Activated B cell treated with CpG ODN at 0.5 μM for 24 hours (primary cell): ENCODE measurements at regions of chr19 and their contacts with region 1.

Region 1: GRCh38 chr19:49210108-49210900 is 52.7 kb downstream of the TRPM4 start:
- DNase-seq: peak; percentile 32
- ATAC-seq: peak; percentile 83
- H3K4me3 Mint-ChIP-seq: peak overlapping the region; percentile 57
- H3K27ac Mint-ChIP-seq: no peak overlapping the region
- H3K4me1 Mint-ChIP-seq: peaks cover 43% of the 10 kb centered on the region
- H3K27me3 Mint-ChIP-seq: no peaks in the 10 kb centered on the region
- CTCF ChIP-seq: no peak

Region 2: DNA sequence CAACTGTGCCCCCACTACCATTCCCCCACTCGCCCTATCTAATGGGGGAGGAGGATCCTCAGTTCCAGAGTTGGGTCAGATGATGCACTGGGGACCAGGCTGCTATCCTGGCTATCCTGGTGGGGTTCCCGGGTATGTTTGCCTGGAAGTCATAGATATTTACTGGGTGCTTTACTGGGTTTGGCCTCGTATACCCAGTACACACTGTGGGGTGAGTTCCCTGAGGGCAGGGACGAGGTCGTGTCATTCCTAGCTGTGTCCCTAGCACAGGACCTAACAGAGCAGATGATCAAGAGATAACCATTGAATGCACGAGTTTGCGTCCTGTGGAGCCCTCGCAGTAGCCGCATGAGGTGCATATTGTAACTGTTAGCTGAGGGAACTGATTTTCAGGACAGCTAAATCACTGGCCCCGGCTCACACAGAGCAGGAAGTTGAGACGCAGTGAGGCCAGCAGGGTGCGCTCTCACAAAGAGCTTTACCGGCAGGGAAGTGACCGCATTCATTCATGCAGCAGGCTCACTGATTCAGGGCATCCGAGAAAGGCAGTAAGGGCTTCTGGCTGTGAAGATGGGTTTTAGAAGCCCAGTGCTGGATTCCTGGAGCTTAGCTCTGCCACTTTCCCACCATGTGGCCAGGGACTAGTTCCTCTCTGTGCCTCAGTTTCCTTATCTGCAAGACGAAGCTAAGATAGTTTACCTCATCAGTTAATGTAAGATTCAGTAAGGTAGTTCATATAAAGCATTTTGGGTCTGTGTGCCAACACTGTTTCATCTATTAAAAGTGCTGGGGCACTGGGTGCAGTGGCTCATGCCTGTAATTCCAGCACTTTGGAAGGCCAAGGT is 210.6 kb before region 1 on chr19:
- CTCF ChIA-PET with region 1: interaction called, 5 read pairs
- POLR2A ChIA-PET with region 1: no interaction called
- intact Hi-C with region 1: loop called (anchors 1 kb)
- DNase-seq: peak; percentile 41
- ATAC-seq: peak; percentile 86
- H3K4me3 Mint-ChIP-seq: no peak overlapping the region
- H3K27ac Mint-ChIP-seq: no peak overlapping the region
- H3K4me1 Mint-ChIP-seq: peaks cover 11% of the 10 kb centered on the region
- H3K27me3 Mint-ChIP-seq: no peaks in the 10 kb centered on the region
- CTCF ChIP-seq: no peak

Region 3: DNA sequence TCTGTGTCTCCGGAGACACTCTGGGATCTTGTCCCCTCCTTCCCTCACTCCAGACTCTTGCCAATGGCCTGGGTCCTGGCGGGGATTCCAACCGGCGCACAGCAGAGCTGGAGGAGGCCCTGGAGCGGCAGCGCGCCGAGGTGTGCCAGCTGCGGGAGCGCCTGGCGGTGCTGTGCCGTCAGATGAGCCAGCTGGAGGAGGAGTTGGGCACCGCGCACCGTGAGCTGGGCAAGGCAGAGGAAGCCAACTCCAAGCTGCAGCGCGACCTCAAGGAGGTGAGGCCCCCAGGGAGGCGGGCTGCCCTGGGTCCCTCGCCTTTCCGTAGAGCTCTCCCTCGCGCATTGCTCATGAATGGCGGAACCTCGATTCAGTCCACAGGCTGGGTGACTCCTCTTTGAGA is 80.0 kb before region 1 on chr19:
- CTCF ChIA-PET with region 1: no interaction called
- POLR2A ChIA-PET with region 1: no interaction called
- intact Hi-C with region 1: no loop called
- DNase-seq: no peak
- ATAC-seq: no peak
- H3K4me3 Mint-ChIP-seq: no peak overlapping the region
- H3K27ac Mint-ChIP-seq: no peak overlapping the region
- H3K4me1 Mint-ChIP-seq: peaks cover 22% of the 10 kb centered on the region
- H3K27me3 Mint-ChIP-seq: peaks cover 19% of the 10 kb centered on the region
- CTCF ChIP-seq: no peak

Region 4: DNA sequence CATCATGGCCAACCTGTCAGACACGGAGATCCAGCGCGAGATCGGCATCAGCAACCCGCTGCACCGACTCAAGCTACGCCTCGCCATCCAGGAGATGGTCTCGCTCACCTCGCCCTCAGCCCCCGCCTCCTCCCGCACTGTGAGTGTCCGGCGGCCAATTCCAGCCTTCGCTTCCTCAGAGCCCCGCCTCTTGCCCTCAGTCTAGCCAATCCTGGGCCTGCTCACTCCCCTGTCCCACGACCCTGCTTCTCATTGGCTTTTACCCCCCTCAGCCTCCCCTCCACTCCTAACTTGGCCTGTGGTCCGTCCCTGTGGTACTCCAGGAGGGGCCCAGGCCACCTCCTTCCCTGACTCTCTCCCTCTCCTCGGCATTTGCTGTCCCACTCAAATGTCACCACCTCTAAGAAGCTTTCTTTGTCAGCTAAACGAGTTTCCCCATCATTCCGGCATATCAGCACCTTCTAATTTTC is 67.4 kb before region 1 on chr19:
- CTCF ChIA-PET with region 1: interaction called, 3 read pairs
- POLR2A ChIA-PET with region 1: interaction called, 11 read pairs
- intact Hi-C with region 1: loop called (anchors 5 kb)
- DNase-seq: no peak
- ATAC-seq: peak; percentile 95
- H3K4me3 Mint-ChIP-seq: peak overlapping the region; percentile 65
- H3K27ac Mint-ChIP-seq: no peak overlapping the region
- H3K4me1 Mint-ChIP-seq: peaks cover 12% of the 10 kb centered on the region
- H3K27me3 Mint-ChIP-seq: peaks cover 34% of the 10 kb centered on the region
- CTCF ChIP-seq: no peak

Region 5: DNA sequence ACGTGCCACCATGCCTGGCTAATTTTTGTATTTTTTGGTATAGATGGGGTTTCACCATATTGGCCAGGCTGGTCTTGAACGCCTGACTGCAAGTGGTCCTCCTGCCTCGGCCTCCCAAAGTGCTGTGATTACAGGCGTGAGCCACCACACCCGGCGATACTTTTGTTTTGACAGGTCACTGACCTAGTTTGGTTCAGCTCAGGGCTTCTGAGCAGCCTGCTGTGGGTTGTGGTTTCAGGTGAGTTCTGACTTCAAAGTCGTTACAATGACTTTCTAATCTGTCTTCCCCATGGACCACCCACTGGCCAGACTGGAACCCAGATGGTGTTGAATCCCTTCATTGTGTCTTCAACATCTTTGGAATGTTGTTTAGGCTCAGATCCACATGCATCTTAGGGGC is 21.1 kb after region 1 on chr19:
- CTCF ChIA-PET with region 1: no interaction called
- POLR2A ChIA-PET with region 1: no interaction called
- intact Hi-C with region 1: no loop called
- DNase-seq: no peak
- ATAC-seq: peak; percentile 40
- H3K4me3 Mint-ChIP-seq: no peak overlapping the region
- H3K27ac Mint-ChIP-seq: peak overlapping the region; percentile 21
- H3K4me1 Mint-ChIP-seq: peaks cover 14% of the 10 kb centered on the region
- H3K27me3 Mint-ChIP-seq: peaks cover 7% of the 10 kb centered on the region
- CTCF ChIP-seq: no peak

Region 6: DNA sequence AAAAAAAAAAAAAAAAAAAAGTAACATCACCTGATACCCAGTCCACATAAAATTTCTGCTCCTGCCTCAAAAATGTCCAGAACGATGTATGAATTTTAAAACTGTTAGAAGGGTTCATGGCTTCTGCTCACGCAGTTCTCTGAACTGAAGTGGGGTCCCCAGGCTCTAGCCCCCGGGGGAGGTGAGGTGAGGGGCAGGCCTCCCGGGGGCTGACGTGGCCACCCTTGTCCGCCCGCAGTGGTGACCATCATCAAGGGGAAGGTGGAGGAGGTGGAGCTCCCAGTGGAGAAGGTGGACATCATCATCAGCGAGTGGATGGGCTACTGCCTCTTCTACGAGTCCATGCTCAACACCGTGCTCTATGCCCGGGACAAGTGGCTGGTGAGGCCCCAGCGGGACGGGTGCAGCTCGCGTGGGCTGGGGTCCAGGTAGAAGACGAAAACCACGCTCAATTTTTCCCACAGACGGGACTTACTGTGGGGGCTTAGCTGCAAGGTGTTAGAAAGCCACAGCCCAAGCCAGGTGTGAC is 473.4 kb after region 1 on chr19:
- CTCF ChIA-PET with region 1: no interaction called
- POLR2A ChIA-PET with region 1: interaction called, 12 read pairs
- intact Hi-C with region 1: no loop called
- DNase-seq: no peak
- ATAC-seq: no peak
- H3K4me3 Mint-ChIP-seq: no peak overlapping the region
- H3K27ac Mint-ChIP-seq: no peak overlapping the region
- H3K4me1 Mint-ChIP-seq: peaks cover 26% of the 10 kb centered on the region
- H3K27me3 Mint-ChIP-seq: no peaks in the 10 kb centered on the region
- CTCF ChIP-seq: no peak